PC-3 (cell line): ENCODE measurements at regions of chr19 and their contacts with region 1.

Region 1: GRCh38 chr19:41310033-41310758 is at the start of gene CCDC97:
- DNase-seq: peak; percentile 78
- ATAC-seq: peak; percentile 59
- H3K4me3 ChIP-seq: peak within 1 kb of the TSS; percentile 76
- H3K27ac ChIP-seq: peak within 1 kb of the TSS; percentile 86
- H3K4me1 ChIP-seq: peaks cover 10% of the 10 kb centered on the region; the same call in 1 of the 2 replicates
- H3K27me3 ChIP-seq: no peaks in the 10 kb centered on the region
- CTCF ChIP-seq: no peak
- total RNA-seq, gene CCDC97: 18.3 and 18.4 TPM in 2 replicates

Region 2: DNA sequence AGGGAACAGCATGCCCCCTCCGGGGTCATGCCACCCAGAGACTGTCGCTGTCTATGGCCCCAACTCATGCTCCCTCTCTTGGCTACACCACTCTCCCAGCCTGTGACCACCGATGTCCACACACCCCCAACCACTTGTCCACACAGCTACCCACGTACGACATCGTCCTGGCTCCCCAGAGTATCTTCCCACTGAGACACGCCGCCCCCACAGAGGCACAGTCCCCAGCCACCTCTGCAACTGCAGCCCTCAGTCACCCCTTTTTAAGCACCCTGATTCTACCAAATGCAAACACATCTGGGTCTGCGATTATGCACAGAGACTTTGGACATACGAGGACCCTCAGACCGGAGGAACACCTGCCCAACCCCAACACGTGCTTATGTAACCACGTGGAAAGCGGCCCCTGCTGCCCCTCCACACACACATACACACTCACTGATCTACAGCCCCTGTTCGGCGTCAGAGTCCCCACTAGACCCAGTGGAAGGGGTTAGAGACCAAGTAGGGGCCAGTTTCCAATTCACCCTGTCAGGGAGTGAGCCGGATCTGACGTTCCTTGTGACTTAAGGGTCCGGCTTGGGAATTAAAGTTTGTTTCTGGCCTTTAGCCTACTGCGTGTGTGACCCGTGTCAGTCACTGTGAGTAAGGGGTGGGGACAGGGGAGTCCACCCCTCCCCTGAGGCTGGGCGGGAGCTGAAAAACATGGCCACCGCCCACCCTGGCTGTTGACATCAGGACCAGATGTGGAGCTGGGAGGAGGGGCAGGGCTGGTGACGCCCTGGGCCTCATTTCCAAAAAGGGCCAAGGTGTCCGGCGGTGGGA is 103.1 kb before region 1 on chr19:
- CTCF ChIA-PET with region 1: no interaction called
- POLR2A ChIA-PET with region 1: no interaction called
- intact Hi-C with region 1: loop called (anchors 2 kb)
- DNase-seq: no peak
- ATAC-seq: no peak
- H3K4me3 ChIP-seq: no peak overlapping the region
- H3K27ac ChIP-seq: no peak overlapping the region
- H3K4me1 ChIP-seq: no peaks in the 10 kb centered on the region
- H3K27me3 ChIP-seq: no peaks in the 10 kb centered on the region
- CTCF ChIP-seq: no peak